Natural killer cell (primary cell): ENCODE measurements at regions of chr6 and their contacts with region 1.

Region 1: DNA sequence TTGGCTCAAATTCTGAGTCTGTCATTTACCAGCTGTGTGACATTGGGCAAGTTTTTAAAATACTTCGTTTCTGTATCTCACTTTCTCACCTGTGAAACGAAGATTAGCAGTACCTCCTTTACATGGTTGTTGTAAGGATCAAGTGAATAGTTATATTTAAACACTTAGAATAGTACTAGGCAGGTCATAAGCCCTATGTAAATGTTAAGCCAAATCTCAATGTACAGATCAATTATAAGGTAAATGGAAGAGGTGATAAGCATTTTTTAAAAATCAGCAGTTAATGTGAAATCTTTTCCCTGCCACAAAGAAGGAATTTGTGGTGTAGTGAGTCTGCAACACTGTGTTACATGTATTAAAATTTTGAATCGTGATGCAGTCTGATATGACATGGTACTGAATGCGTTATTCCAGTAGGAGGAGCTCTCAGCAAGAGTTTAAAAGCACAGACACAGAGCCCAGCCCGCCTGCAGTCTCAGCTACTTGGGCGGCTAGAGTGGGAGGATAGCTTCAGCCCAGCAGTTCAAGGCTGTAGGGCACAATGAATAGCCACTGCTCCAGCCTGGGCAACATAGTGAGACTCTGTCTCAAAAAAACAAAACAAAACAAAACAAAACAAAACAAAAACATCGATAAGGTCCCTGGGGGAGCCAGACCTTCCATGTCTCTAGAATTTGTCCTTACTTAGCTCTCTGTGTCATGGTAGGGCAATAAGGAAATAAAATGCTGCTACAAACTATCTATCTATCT is 46.0 kb downstream of the GTF2H5 start:
- DNase-seq: peak in 1 of 2 donors; percentile 81
- ATAC-seq: peak; percentile 83 to 97 (median 93)
- H3K4me3 ChIP-seq: no peak overlapping the region
- H3K4me3 Mint-ChIP-seq: no peak overlapping the region
- H3K27ac ChIP-seq: no peak overlapping the region
- H3K27ac Mint-ChIP-seq: no peak overlapping the region
- H3K4me1 ChIP-seq: no peaks in the 10 kb centered on the region
- H3K4me1 Mint-ChIP-seq: peaks cover under 1 to 13% of the 10 kb centered on the region in 2 donors
- H3K27me3 ChIP-seq: no peaks in the 10 kb centered on the region
- H3K27me3 Mint-ChIP-seq: peaks cover 0 to 1% of the 10 kb centered on the region in 2 donors
- CTCF ChIP-seq: peak; percentile 76

Region 2: GRCh38 chr6:158244373-158244772 is 30.3 kb after region 1 on chr6:
- intact Hi-C with region 1: no loop called
- DNase-seq: no peak
- ATAC-seq: no peak
- H3K4me3 ChIP-seq: no peak overlapping the region
- H3K4me3 Mint-ChIP-seq: no peak overlapping the region
- H3K27ac ChIP-seq: no peak overlapping the region
- H3K27ac Mint-ChIP-seq: no peak overlapping the region
- H3K4me1 ChIP-seq: peaks cover 7% of the 10 kb centered on the region
- H3K4me1 Mint-ChIP-seq: peaks cover 11 to 22% of the 10 kb centered on the region in 2 donors
- H3K27me3 ChIP-seq: no peaks in the 10 kb centered on the region
- H3K27me3 Mint-ChIP-seq: no peaks in the 10 kb centered on the region
- CTCF ChIP-seq: no peak

Region 3: GRCh38 chr6:158605266-158605878 is 391.3 kb after region 1 on chr6:
- intact Hi-C with region 1: loop called (anchors 1 kb)
- DNase-seq: peak; percentile 41 to 77
- ATAC-seq: peak; percentile 68 to 92 (median 84)
- H3K4me3 ChIP-seq: no peak overlapping the region
- H3K4me3 Mint-ChIP-seq: no peak overlapping the region
- H3K27ac ChIP-seq: no peak overlapping the region
- H3K27ac Mint-ChIP-seq: peak overlapping the region; percentile 32 to 71
- H3K4me1 ChIP-seq: no peaks in the 10 kb centered on the region
- H3K4me1 Mint-ChIP-seq: peaks cover 23% of the 10 kb centered on the region in 2 donors
- H3K27me3 ChIP-seq: no peaks in the 10 kb centered on the region
- H3K27me3 Mint-ChIP-seq: no peaks in the 10 kb centered on the region
- CTCF ChIP-seq: peak; percentile 71

Region 4: GRCh38 chr6:158686791-158687381 is 472.8 kb after region 1 on chr6:
- intact Hi-C with region 1: loop called (anchors 5 kb)
- DNase-seq: peak; percentile 44 to 90
- ATAC-seq: peak; percentile 84 to 94 (median 93)
- H3K4me3 ChIP-seq: no peak overlapping the region
- H3K4me3 Mint-ChIP-seq: peak overlapping the region; percentile 85
- H3K27ac ChIP-seq: peak overlapping the region; percentile 92
- H3K27ac Mint-ChIP-seq: peak overlapping the region; percentile 88 to 97
- H3K4me1 ChIP-seq: peaks cover 37% of the 10 kb centered on the region
- H3K4me1 Mint-ChIP-seq: peaks cover 43 to 51% of the 10 kb centered on the region in 2 donors
- H3K27me3 ChIP-seq: no peaks in the 10 kb centered on the region
- H3K27me3 Mint-ChIP-seq: no peaks in the 10 kb centered on the region
- CTCF ChIP-seq: no peak